Calu3 (cell line): ENCODE measurements at regions of chr6 and their contacts with region 1.

Region 1: GRCh38 chr6:28355743-28356665 is 6.3 kb downstream of the ZKSCAN3 start:
- DNase-seq: peak; percentile 83
- H3K4me3 Mint-ChIP-seq: peak overlapping the region; percentile 86
- H3K27ac Mint-ChIP-seq: peak overlapping the region; percentile 72
- H3K4me1 Mint-ChIP-seq: peaks cover 17% of the 10 kb centered on the region
- H3K27me3 Mint-ChIP-seq: no peaks in the 10 kb centered on the region
- CTCF ChIP-seq: peak; percentile 84

Region 2: DNA sequence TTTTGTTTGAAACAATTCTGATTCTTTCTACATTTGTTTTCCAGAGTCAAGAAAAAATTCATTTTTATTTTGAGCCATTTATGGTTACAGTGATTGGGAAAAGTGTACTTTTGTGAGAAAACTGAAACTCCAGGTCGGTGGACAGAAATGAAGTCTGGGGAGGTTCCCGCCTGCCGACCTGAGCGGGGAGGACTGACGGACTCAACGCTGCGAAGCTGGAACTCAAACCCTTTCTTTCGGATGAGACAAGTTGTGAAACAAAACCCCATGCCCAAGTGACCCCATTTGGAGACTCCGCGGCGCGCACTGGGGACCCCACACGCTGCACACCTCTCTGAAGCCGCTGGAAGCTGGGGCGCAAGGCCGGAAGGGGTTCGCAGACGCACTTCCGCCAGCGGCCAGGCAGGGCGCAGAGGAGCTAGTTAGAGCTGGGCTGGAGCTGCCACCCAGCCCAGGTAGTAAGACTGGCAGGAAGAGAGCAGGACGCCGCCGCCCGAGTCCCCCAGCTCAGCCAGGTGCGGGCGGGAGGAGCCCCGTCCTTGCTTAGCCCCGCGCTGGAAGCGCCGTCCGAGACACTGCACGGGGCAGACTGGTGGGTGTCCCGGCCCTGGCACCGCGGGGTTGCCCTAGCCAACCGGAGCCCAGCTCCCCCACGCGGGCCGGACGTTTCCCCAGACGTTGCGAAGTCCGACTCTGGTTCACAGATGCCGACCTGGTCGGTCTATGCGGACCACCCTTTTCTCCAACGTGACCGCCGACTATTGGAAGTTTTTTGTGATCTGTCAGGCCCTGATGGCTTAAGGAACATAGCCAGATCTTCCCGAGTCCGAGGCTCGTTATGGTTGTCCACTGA is 251.4 kb before region 1 on chr6:
- CTCF ChIA-PET with region 1: interaction called, 10 read pairs
- intact Hi-C with region 1: no loop called
- DNase-seq: peak; percentile 90
- H3K4me3 Mint-ChIP-seq: peak overlapping the region; percentile 79
- H3K27ac Mint-ChIP-seq: peak overlapping the region; percentile 76
- H3K4me1 Mint-ChIP-seq: no peaks in the 10 kb centered on the region
- H3K27me3 Mint-ChIP-seq: peaks cover 26% of the 10 kb centered on the region
- CTCF ChIP-seq: peak; percentile 88

Region 3: GRCh38 chr6:28212510-28213212 is 143.3 kb before region 1 on chr6:
- CTCF ChIA-PET with region 1: no interaction called
- intact Hi-C with region 1: loop called (anchors 5 kb)
- DNase-seq: peak; percentile 90
- H3K4me3 Mint-ChIP-seq: peak overlapping the region; percentile 71
- H3K27ac Mint-ChIP-seq: peak overlapping the region; percentile 68
- H3K4me1 Mint-ChIP-seq: peaks cover 17% of the 10 kb centered on the region
- H3K27me3 Mint-ChIP-seq: no peaks in the 10 kb centered on the region
- CTCF ChIP-seq: no peak

Region 4: GRCh38 chr6:28266962-28267694 is 88.9 kb before region 1 on chr6 and contains the start of gene ZSCAN26:
- CTCF ChIA-PET with region 1: interaction called, 11 read pairs
- intact Hi-C with region 1: loop called (anchors 2 kb)
- DNase-seq: peak; percentile 89
- H3K4me3 Mint-ChIP-seq: no peak within 1 kb of the TSS
- H3K27ac Mint-ChIP-seq: no peak within 1 kb of the TSS
- H3K4me1 Mint-ChIP-seq: no peaks in the 10 kb centered on the region
- H3K27me3 Mint-ChIP-seq: no peaks in the 10 kb centered on the region
- CTCF ChIP-seq: no peak
- total RNA-seq, gene ZSCAN26: 13.1 and 14.2 TPM in 2 replicates

Region 5: GRCh38 chr6:28335564-28336283 is 20.3 kb before region 1 on chr6 and contains the start of gene ZSCAN31:
- CTCF ChIA-PET with region 1: interaction called, 11 read pairs
- intact Hi-C with region 1: no loop called
- DNase-seq: peak; percentile 91
- H3K4me3 Mint-ChIP-seq: no peak within 1 kb of the TSS
- H3K27ac Mint-ChIP-seq: no peak within 1 kb of the TSS
- H3K4me1 Mint-ChIP-seq: peaks cover 9% of the 10 kb centered on the region
- H3K27me3 Mint-ChIP-seq: no peaks in the 10 kb centered on the region
- CTCF ChIP-seq: no peak
- total RNA-seq, gene ZSCAN31: 4.9 and 5.8 TPM in 2 replicates

Region 6: DNA sequence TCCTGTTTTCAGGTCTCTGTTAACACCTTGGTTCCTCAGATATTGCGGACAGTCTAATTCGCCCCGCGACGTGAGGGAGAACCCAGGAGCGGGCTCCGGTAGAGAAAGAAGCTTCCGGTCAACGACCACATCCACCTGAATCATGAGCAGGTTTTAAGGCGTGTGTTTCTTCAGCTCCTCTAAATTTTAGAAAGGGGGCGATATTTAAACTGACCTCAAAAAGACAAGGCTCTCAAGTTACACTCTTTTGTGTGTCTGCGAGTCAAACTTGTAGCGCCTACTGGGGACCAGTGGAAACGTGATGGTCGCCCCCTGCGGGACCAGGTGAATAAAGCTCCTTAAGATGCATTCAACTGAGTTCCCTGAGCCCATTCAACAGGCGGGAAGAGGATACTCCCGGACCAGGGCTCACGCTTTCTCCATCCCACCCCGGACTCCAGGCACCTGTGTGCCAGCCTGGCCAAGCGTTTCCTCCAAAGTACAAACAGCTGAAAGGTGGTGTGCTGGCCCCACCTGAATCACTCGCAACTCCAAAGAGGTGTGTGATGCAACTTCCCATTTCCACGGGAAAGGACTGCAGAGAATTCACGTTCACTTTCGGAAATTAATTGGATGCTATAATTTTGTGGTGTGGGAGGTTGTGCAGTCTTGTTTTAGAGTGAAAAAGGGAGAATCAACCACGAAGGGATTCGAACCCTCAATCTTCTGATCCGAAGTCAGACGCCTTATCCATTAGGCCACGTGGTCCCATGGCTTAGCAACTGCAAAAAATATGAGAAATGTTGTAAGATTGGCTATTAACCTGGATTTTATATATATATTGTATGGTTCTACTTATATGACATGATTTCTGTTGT is 186.7 kb after region 1 on chr6:
- CTCF ChIA-PET with region 1: no interaction called
- intact Hi-C with region 1: no loop called
- DNase-seq: peak; percentile 77
- H3K4me3 Mint-ChIP-seq: peak overlapping the region; percentile 64
- H3K27ac Mint-ChIP-seq: peak overlapping the region; percentile 96
- H3K4me1 Mint-ChIP-seq: peaks cover 10% of the 10 kb centered on the region
- H3K27me3 Mint-ChIP-seq: no peaks in the 10 kb centered on the region
- CTCF ChIP-seq: peak; percentile 44